MCF 10A (cell line): ENCODE measurements at regions of chr10 and their contacts with region 1.

Region 1: DNA sequence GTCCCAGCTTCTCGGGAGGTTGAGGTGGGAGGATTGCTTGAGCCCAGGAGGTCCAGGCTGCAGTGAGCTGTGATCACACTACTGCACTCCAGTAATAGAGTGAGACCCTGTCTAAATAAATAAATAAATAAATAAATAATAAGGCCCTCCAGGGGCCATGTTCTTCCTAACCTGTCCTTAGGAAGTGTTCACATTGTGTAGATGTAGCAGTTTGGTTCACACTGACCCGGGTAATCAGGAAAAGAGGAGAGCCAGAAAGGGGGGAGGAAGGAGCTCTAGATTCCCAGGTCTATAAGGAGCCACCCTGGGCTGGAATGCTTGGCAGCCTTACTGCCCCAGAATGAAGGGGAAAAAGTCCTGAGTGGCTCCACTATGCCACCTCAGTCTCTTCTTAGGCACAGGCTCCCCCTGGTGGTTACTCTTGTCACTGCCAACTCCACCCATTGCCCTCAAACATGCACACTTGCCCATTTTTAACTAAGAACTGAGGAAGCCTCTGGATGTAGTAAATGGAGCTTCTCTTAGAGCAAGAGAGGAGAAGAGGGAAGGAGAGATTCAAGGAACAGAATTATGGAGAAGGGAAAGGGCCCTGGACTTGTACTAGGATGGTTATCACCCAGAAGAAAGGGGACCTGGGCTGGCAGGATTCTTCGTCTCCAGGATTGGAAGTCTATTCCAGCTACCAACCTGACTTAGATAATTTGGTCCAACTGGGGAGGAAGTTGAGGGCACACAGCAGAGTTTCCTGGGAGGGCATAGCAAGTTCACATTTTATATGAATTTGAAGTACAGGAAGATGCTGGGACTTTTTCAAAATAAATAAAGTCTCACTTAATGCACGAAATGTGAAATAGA is 7.8 kb downstream of the HPS6 start:
- DNase-seq: peak; percentile 86
- H3K4me3 Mint-ChIP-seq: no peak overlapping the region
- H3K27ac Mint-ChIP-seq: peak overlapping the region; percentile 76
- H3K4me1 Mint-ChIP-seq: peaks cover 12% of the 10 kb centered on the region
- H3K27me3 Mint-ChIP-seq: no peaks in the 10 kb centered on the region
- CTCF ChIP-seq: peak; percentile 84

Region 2: GRCh38 chr10:101602761-101603398 is 470.0 kb before region 1 on chr10:
- CTCF ChIA-PET with region 1: no interaction called
- POLR2A ChIA-PET with region 1: no interaction called
- intact Hi-C with region 1: loop called (anchors 5 kb)
- DNase-seq: peak; percentile 74
- H3K4me3 Mint-ChIP-seq: no peak overlapping the region
- H3K27ac Mint-ChIP-seq: no peak overlapping the region
- H3K4me1 Mint-ChIP-seq: no peaks in the 10 kb centered on the region
- H3K27me3 Mint-ChIP-seq: no peaks in the 10 kb centered on the region
- CTCF ChIP-seq: peak; percentile 93

Region 3: GRCh38 chr10:101840741-101841453 is 232.0 kb before region 1 on chr10:
- CTCF ChIA-PET with region 1: interaction called, 13 read pairs
- POLR2A ChIA-PET with region 1: no interaction called
- intact Hi-C with region 1: loop called (anchors 1 kb)
- DNase-seq: peak; percentile 79
- H3K4me3 Mint-ChIP-seq: peak overlapping the region; percentile 57
- H3K27ac Mint-ChIP-seq: no peak overlapping the region
- H3K4me1 Mint-ChIP-seq: peaks cover 15% of the 10 kb centered on the region
- H3K27me3 Mint-ChIP-seq: no peaks in the 10 kb centered on the region
- CTCF ChIP-seq: peak; percentile 85

Region 4: DNA sequence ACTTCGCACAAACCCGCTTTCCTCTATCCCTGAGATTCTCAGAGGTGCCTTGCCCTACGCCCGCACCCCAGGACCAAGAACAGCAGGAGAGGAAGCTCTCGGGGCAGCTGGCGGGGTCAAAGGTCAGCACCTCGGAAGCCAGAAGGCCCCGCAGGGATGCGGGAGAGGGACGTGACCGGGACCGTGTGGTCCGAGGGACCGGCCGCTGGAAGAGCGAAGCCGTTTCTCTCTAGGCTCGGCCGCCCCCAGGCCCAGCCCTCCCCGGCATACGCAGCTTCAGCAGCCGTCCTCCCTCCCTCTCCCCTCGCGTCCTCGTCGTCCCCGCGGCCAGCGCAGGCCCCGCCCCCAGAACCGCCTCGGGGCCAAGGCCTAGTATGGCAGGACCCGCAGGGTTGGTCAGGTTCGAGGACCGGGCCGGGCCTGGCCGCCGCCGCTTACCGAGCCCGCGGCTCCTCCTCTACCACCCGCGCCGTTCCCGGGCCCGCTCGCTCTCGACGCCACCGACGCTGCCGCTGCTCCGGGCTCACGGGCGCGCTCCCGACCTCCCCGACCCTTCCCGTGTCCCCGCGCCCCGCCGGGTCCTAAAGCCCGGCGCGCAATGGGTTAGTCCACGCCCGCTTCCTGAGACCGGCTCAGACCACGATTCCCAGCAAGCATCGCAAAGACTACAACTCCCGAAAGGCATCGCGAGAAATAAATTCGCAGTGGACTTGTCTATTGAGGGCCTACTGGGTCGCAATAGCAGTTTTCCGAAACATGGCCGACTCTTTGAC is 17.1 kb before region 1 on chr10 and contains the start of gene ARMH3:
- CTCF ChIA-PET with region 1: interaction called, 25 read pairs
- POLR2A ChIA-PET with region 1: interaction called, 8 read pairs
- intact Hi-C with region 1: no loop called
- DNase-seq: peak; percentile 98
- H3K4me3 Mint-ChIP-seq: peak within 1 kb of the TSS; percentile 92
- H3K27ac Mint-ChIP-seq: peak within 1 kb of the TSS; percentile 89
- H3K4me1 Mint-ChIP-seq: peaks cover 24% of the 10 kb centered on the region
- H3K27me3 Mint-ChIP-seq: no peaks in the 10 kb centered on the region
- CTCF ChIP-seq: no peak
- total RNA-seq, gene ARMH3: 17.6 and 18.9 TPM in 2 replicates

Region 5: GRCh38 chr10:102101152-102101551 is 28.3 kb after region 1 on chr10:
- CTCF ChIA-PET with region 1: interaction called, 39 read pairs
- POLR2A ChIA-PET with region 1: no interaction called
- intact Hi-C with region 1: no loop called
- DNase-seq: peak; percentile 44
- H3K4me3 Mint-ChIP-seq: no peak overlapping the region
- H3K27ac Mint-ChIP-seq: no peak overlapping the region
- H3K4me1 Mint-ChIP-seq: no peaks in the 10 kb centered on the region
- H3K27me3 Mint-ChIP-seq: no peaks in the 10 kb centered on the region
- CTCF ChIP-seq: no peak